Naive thymus-derived CD4-positive, alpha-beta T cell (primary cell): ENCODE measurements at regions of chr6 and their contacts with region 1.

Region 1: GRCh38 chr6:90080876-90081481 is 186.7 kb downstream of the GJA10 start:
- DNase-seq: peak; percentile 24 to 87 (median 82)
- ATAC-seq: peak; percentile 86
- H3K4me3 ChIP-seq: peak overlapping the region; percentile 57
- H3K4me3 Mint-ChIP-seq: peak overlapping the region; percentile 84 to 99 (median 89)
- H3K27ac ChIP-seq: peak overlapping the region; percentile 84
- H3K27ac Mint-ChIP-seq: peak overlapping the region; percentile 90 to 99 (median 97)
- H3K4me1 ChIP-seq: peaks cover 54 to 71% of the 10 kb centered on the region in 2 donors
- H3K4me1 Mint-ChIP-seq: peaks cover 48 to 100% (median 92%) of the 10 kb centered on the region in 7 donors
- H3K27me3 ChIP-seq: no peaks in the 10 kb centered on the region
- H3K27me3 Mint-ChIP-seq: peaks cover 0 to 11% (median 0%) of the 10 kb centered on the region in 5 donors

Region 2: DNA sequence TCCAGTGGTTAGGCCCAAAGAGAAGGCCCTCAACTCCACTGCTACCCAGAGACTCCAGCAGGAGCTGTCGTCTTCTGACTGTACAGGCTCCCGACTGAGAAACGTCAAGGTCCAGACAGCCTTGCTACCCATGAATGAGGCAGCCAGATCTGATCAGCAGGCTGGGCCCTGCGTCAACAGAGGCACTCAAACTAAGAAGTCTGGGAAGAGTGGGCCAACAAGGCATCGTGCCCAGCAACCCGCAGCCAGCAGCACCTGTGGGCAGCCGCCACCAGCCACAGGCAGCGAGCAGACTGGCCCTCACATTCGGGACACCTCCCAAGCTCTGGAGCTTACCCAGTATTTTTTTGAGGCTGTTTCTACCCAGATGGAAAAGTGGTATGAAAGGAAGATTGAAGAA is 450.5 kb before region 1 on chr6:
- CTCF ChIA-PET with region 1: no interaction called
- POLR2A ChIA-PET with region 1: no interaction called
- intact Hi-C with region 1: no loop called
- DNase-seq: no peak
- ATAC-seq: no peak
- H3K4me3 ChIP-seq: no peak overlapping the region
- H3K4me3 Mint-ChIP-seq: no peak overlapping the region
- H3K27ac ChIP-seq: no peak overlapping the region
- H3K27ac Mint-ChIP-seq: no peak overlapping the region
- H3K4me1 ChIP-seq: no peaks in the 10 kb centered on the region
- H3K4me1 Mint-ChIP-seq: peaks cover 0 to 14% (median 3%) of the 10 kb centered on the region in 7 donors
- H3K27me3 ChIP-seq: no peaks in the 10 kb centered on the region
- H3K27me3 Mint-ChIP-seq: no peaks in the 10 kb centered on the region

Region 3: DNA sequence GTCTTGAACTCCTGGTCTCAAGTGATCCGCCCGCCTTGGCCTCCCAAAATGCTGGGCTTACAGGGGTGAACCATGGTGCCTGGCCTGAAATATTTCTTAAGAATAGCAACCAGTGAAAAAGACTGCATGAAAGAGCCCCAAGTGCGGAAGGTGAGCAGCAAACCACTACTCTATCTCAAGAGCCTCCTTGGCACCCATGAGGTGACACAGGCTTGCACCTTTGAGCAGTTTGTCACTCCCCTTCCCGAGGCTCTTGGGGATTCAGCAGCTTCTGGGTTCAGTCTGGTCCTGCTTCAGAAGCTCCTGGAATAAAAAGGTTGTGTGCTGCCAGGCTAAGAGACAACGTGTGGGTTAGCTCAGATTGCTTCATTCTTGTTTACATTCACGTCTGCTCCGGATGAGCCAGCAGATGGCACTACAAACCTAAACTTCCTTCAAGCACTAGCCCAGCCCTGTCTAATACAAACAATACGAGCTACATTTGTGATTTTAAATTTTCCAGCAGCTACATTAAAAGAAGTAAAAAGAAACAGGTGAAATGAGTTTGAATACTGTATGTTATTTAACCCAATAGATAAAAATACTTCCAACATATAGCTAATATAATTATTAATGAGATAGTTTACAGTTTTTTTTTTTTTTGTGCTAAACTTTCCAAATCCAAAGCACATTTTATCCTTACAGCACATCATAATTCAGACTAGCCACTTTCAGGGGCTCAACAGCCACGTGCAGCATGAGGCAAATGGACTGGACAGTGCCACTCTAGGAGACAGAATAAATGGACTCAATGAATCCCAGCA is 140.6 kb before region 1 on chr6:
- CTCF ChIA-PET with region 1: interaction called, 3 read pairs
- POLR2A ChIA-PET with region 1: interaction called, 3 read pairs
- intact Hi-C with region 1: loop called (anchors 1 to 2 kb)
- DNase-seq: peak; percentile 22 to 80 (median 70)
- ATAC-seq: peak; percentile 90
- H3K4me3 ChIP-seq: no peak overlapping the region
- H3K4me3 Mint-ChIP-seq: peak overlapping the region in 1 of 10 donors; percentile 48
- H3K27ac ChIP-seq: peak overlapping the region; percentile 53
- H3K27ac Mint-ChIP-seq: peak overlapping the region in 8 of 9 donors; percentile 50 to 91 (median 78)
- H3K4me1 ChIP-seq: peaks cover 0 to 9% of the 10 kb centered on the region in 2 donors
- H3K4me1 Mint-ChIP-seq: peaks cover 6 to 75% (median 39%) of the 10 kb centered on the region in 7 donors
- H3K27me3 ChIP-seq: no peaks in the 10 kb centered on the region
- H3K27me3 Mint-ChIP-seq: no peaks in the 10 kb centered on the region

Region 4: DNA sequence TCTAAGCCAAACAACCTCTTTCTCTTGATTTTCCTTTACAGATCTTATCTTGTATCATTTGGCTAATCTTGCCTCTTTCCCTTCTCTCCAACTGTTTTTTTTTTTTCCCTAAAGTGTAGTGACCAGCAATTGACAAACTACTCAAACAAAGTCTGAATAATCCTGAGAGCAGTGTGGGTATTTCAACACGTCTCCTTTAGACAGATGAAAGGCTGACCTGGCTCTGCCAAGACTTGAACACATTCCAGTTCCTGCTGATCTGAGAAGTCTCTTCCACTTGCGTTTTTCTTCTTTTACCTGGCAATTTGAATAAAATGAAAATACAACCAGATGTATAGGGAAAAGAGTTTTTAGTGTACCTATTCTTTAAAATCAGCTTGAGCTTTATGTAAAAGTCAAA is 18.3 kb before region 1 on chr6:
- CTCF ChIA-PET with region 1: no interaction called
- POLR2A ChIA-PET with region 1: no interaction called
- intact Hi-C with region 1: loop called in 1 of 2 experiments (anchors 2 kb)
- DNase-seq: no peak
- ATAC-seq: no peak
- H3K4me3 ChIP-seq: no peak overlapping the region
- H3K4me3 Mint-ChIP-seq: no peak overlapping the region
- H3K27ac ChIP-seq: no peak overlapping the region
- H3K27ac Mint-ChIP-seq: no peak overlapping the region
- H3K4me1 ChIP-seq: peaks cover 0 to 22% of the 10 kb centered on the region in 2 donors
- H3K4me1 Mint-ChIP-seq: peaks cover 24 to 42% (median 31%) of the 10 kb centered on the region in 7 donors
- H3K27me3 ChIP-seq: no peaks in the 10 kb centered on the region
- H3K27me3 Mint-ChIP-seq: no peaks in the 10 kb centered on the region

Region 5: GRCh38 chr6:90160013-90160412 is 79.0 kb after region 1 on chr6:
- CTCF ChIA-PET with region 1: no interaction called
- POLR2A ChIA-PET with region 1: interaction called, 4 read pairs
- intact Hi-C with region 1: loop called in 1 of 2 experiments (anchors 1 kb)
- DNase-seq: no peak
- ATAC-seq: peak; percentile 41
- H3K4me3 ChIP-seq: no peak overlapping the region
- H3K4me3 Mint-ChIP-seq: peak overlapping the region in 9 of 10 donors; percentile 3 to 73 (median 48)
- H3K27ac ChIP-seq: peak overlapping the region; percentile 28
- H3K27ac Mint-ChIP-seq: peak overlapping the region in 8 of 9 donors; percentile 84 to 94 (median 92)
- H3K4me1 ChIP-seq: peaks cover 8 to 77% of the 10 kb centered on the region in 2 donors
- H3K4me1 Mint-ChIP-seq: peaks cover 18 to 96% (median 83%) of the 10 kb centered on the region in 7 donors
- H3K27me3 ChIP-seq: no peaks in the 10 kb centered on the region
- H3K27me3 Mint-ChIP-seq: no peaks in the 10 kb centered on the region

Region 6: DNA sequence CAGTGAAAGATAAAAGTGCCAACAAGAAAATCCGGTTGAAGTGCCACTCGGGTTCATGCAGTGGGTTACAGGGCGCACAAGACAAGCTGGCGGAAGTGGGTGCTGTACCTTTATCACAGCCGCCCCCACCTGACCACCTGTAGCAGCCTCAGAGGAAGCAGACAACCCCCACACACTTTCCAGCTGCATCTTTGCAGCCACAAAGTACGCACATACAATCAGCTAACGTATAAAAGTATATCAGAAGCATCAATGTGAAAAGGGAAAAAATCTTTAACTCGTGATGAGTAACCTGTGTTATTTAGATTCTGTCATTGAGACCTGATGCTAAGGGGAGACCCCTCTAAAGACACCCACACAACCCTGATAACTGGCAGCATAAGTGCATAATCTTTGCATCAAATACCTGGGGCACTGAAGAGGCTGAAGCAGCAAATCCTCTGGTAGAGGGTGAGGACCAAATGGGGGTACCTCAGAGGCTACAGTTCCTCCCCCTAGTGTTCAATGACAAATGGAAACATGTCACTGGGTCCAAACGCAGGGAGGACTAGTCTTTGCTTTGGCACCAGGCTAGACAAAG is 193.6 kb after region 1 on chr6:
- CTCF ChIA-PET with region 1: interaction called, 4 read pairs
- POLR2A ChIA-PET with region 1: interaction called, 3 read pairs
- intact Hi-C with region 1: loop called (anchors 1 kb)
- DNase-seq: peak; percentile 57 to 99 (median 98)
- ATAC-seq: peak; percentile 96
- H3K4me3 ChIP-seq: peak overlapping the region; percentile 19
- H3K4me3 Mint-ChIP-seq: peak overlapping the region; percentile 73 to 90 (median 80)
- H3K27ac ChIP-seq: peak overlapping the region; percentile 99
- H3K27ac Mint-ChIP-seq: peak overlapping the region; percentile 80 to 100 (median 100)
- H3K4me1 ChIP-seq: peaks cover 18 to 85% of the 10 kb centered on the region in 2 donors
- H3K4me1 Mint-ChIP-seq: peaks cover 46 to 99% (median 89%) of the 10 kb centered on the region in 7 donors
- H3K27me3 ChIP-seq: no peaks in the 10 kb centered on the region
- H3K27me3 Mint-ChIP-seq: no peaks in the 10 kb centered on the region

Region 7: DNA sequence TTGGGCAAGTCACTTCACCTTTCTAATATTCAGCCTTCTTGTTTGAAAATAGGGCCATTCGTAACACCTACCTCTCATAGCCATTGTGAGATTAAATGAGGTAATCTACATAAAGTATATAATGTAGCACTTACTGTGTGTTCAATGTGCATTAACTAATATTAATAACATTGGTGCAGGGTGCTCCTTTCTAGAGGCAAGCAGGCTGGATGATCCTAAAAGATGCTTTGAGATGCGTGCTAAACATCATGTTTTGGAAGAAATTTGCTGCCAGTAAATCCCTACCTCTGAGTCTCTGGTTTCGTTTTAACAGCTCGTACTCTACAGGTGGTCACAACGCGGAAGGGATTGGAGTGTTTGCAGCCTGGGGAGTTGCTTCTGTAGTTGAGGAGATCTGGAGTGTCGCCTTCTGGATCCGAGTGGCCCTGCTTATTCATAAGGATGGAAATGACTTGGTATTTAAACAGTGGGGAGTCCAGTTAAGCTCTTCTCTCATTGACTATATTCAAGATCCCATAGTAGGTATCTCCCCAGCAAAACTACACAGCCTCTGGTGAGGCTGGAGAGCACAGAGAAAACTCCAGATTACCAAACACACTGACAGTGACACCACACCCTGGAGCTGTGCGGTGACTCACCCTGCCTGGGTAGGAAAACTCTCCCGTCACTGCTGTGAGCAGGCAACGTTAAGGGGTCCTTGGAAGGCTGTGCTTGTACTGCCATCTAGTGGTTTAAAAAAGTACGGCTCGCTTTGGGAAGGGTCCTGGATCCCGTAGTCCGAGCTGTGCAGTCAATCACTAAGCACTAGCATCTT is 398.0 kb after region 1 on chr6:
- CTCF ChIA-PET with region 1: no interaction called
- POLR2A ChIA-PET with region 1: no interaction called
- intact Hi-C with region 1: loop called in 1 of 2 experiments (anchors 2 kb)
- DNase-seq: peak; percentile 57 to 87 (median 80)
- ATAC-seq: peak; percentile 98
- H3K4me3 ChIP-seq: no peak overlapping the region
- H3K4me3 Mint-ChIP-seq: peak overlapping the region in 4 of 10 donors; percentile 29 to 62 (median 53)
- H3K27ac ChIP-seq: no peak overlapping the region
- H3K27ac Mint-ChIP-seq: peak overlapping the region in 8 of 9 donors; percentile 3 to 89 (median 58)
- H3K4me1 ChIP-seq: peaks cover 6 to 13% of the 10 kb centered on the region in 2 donors
- H3K4me1 Mint-ChIP-seq: peaks cover 9 to 54% (median 26%) of the 10 kb centered on the region in 7 donors
- H3K27me3 ChIP-seq: no peaks in the 10 kb centered on the region
- H3K27me3 Mint-ChIP-seq: no peaks in the 10 kb centered on the region